Activated T-helper 1 cell treated with anti-CD3 and anti-CD28 coated beads, Interleukin-12 subunit alpha, Interleukin-12 subunit beta, Interleukin-2, Interleukin-4 antibody, amounts not matched to agents 30 ng/mL and 10 ng/mL and 1 ng/mL, durations not matched to agents 14 hours and 24 hours and 36 hours (primary cell): ENCODE measurements at regions of chr4 and their contacts with region 1.

Region 1: GRCh38 chr4:184583738-184584502 is 65.3 kb downstream of the CASP3 start:
- DNase-seq: peak; percentile 9
- H3K4me3 Mint-ChIP-seq: peak overlapping the region; percentile 20
- H3K27ac Mint-ChIP-seq: peak overlapping the region; percentile 79
- H3K4me1 Mint-ChIP-seq: peaks cover 25% of the 10 kb centered on the region
- H3K27me3 Mint-ChIP-seq: no peaks in the 10 kb centered on the region

Region 2: DNA sequence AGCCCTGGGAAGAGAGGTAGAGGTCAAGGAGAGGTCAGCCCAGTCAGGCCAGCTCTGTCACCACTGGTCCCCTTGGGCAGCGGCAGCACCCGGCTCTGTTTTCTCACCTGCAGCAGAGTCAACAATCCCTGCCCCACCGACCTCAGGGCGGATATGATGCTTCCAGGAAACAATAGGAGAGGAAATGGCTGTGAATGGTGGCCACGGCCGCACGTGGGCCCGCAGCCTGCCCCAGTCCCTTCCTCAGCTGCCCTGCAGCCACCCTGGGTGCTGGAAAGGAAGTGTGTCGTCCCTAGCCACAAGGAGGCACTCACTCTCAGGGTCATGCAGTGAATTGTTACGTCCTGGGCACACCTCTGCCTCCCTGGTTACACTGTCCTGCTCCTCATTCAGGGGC is 273.8 kb before region 1 on chr4:
- intact Hi-C with region 1: no loop called
- DNase-seq: no peak
- H3K4me3 Mint-ChIP-seq: peak overlapping the region; percentile 34
- H3K27ac Mint-ChIP-seq: peak overlapping the region; percentile 74
- H3K4me1 Mint-ChIP-seq: peaks cover 65% of the 10 kb centered on the region
- H3K27me3 Mint-ChIP-seq: no peaks in the 10 kb centered on the region

Region 3: GRCh38 chr4:184599492-184600135 is 15.7 kb after region 1 on chr4:
- intact Hi-C with region 1: loop called (anchors 2 kb)
- DNase-seq: no peak
- H3K4me3 Mint-ChIP-seq: no peak overlapping the region
- H3K27ac Mint-ChIP-seq: no peak overlapping the region
- H3K4me1 Mint-ChIP-seq: peaks cover 10% of the 10 kb centered on the region
- H3K27me3 Mint-ChIP-seq: peaks cover 9% of the 10 kb centered on the region

Region 4: DNA sequence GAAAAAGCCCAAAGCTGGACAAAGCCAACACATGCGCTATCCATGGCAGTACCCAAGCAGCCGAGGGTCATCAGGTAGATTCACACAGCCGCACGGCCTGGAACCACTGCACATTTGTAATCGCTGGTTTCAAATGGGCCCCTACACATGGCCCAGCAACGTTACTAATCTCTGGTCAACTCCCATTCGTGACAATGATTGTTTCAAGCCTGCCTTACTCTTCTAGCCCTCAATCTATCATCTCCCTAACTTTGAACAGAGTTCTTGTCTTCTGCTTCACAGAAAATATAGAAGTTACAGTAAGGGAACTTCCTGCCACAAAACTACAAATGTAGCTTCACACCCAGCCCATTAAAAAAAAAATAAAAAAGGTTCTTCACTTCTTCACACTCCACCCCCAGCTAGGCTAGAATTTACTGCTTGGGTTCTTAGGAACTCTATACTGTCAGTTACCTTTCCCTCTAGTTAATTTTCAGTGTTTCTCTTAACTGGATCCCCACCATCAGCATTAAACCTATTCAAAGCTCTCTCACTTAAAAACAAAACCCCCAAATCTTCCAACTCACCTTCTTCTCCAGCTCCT is 41.1 kb after region 1 on chr4:
- intact Hi-C with region 1: loop called (anchors 2 kb)
- DNase-seq: no peak
- H3K4me3 Mint-ChIP-seq: peak overlapping the region; percentile 49
- H3K27ac Mint-ChIP-seq: peak overlapping the region; percentile 88
- H3K4me1 Mint-ChIP-seq: peaks cover 38% of the 10 kb centered on the region
- H3K27me3 Mint-ChIP-seq: no peaks in the 10 kb centered on the region